Mucosa of descending colon (tissue), 3 donors: ENCODE measurements at regions of chr2 and their contacts with region 1.

Region 1: GRCh38 chr2:1675633-1676032 is 68.7 kb downstream of the PXDN start:
- DNase-seq: no peak
- ATAC-seq: peak; percentile 58
- H3K4me3 ChIP-seq: no peak overlapping the region
- H3K4me1 ChIP-seq: no peaks in the 10 kb centered on the region
- CTCF ChIP-seq: no peak

Region 2: DNA sequence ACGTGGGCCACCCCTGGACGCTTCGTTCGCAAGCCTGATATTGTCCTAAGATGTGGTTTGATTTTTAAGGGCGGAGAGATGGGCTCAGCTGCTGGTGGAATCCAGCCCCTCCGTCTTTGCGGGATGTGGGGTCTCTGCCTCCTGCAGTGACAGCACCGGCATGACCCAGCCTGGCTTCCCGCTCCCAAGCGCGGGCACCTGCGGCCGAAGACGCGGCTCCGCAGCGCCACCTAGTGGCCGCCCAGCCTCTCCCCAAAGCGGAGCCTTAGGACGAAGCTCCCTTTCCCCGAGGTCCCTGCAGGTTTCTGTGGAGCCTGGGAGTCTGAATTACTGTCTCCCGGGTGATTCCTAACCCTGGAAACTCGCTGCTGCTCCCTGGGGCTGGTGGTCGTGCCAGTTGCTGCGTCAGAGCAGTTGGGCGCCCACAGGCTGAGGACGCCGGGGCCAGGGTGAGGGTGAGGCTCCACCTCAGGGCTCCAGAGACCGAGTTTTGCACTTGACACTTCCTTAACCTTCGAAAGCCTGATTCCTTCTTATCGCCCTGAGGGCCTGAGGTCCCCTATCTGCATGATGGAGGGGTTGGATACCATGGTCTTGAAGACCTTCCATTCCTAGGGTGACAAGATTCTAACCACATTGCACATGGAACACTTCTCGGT is 124.8 kb before region 1 on chr2:
- intact Hi-C with region 1: no loop called
- DNase-seq: peak in 2 of 3 donors; percentile 66 to 77
- ATAC-seq: peak; percentile 87
- H3K4me3 ChIP-seq: no peak overlapping the region
- H3K4me1 ChIP-seq: no peaks in the 10 kb centered on the region
- CTCF ChIP-seq: peak; percentile 95

Region 3: DNA sequence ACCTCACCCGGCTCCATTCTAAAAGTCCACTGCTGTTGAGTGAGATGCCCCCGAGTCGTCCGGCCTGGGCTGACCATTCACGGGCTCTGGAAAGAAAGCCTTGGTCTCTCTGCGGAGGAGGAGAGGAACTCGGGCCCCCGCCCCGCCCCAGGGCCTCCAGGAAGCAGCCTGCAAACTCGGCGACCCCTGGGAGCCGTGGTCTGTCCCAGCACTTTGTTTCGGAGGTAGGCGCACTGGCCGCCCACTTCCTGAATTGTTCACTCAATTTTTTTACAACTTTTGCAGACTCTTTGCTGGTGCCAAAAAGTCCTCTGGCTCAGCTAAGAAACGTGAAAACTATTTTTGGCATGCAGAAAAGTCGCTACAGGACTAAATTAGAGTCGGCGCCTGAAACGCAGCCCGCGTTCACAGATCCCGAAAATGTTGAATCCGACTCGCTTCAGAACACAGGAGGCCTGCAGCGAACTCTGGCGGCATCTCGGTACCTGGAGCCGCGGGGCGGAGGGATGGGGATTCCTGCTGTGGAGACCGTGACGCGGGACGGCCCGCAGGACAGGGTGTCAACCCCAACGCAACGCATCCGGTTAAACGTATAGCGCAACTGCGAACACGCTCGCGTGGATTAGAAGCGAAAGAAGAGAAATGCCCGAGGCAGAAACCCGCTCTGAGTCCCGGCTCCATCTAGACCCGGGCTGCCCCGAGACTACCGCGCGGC is 67.2 kb after region 1 on chr2:
- intact Hi-C with region 1: loop called in 1 of 2 experiments (anchors 10 kb)
- DNase-seq: peak in 2 of 3 donors; percentile 69 to 77
- ATAC-seq: peak; percentile 52
- H3K4me3 ChIP-seq: no peak overlapping the region
- H3K4me1 ChIP-seq: peaks cover 5% of the 10 kb centered on the region
- CTCF ChIP-seq: no peak